PC-9 (cell line): ENCODE measurements at regions of chr2 and their contacts with region 1.

Region 1: DNA sequence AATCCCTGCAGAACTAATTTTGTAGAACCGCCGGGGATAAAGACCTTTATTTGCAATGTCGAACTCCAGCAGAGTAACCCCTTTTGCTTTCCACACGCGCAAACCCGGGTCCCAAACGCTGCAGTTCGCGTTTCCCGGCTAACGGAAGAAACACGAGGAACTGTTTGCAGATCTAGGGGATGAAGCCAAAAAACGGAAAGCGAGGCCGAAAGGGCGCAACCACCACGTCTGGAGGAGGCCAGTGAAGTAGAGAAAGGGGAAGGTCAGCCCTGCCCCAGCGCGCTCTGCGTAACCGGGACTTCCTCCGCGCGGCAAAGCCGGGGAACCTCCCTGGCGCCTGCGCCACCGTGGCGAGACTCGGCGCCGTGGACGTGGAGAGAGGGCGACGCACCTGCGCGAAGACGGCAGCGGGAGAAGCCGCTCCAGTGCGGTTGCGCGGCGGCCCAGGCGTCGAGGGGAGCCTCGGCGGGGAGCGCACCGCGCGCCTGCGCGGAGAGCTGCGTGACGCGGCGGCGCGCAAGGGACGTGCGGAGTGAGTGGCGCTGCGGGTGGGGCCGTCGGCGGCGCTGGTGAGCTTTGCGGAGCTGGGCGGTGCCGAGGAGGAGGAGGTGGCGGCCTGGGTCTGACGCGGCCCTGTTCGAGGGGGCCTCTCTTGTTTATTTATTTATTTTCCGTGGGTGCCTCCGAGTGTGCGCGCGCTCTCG is at the start of gene PPP1CB:
- DNase-seq: peak; percentile 84 to 96
- H3K4me3 ChIP-seq: peak within 1 kb of the TSS; percentile 93
- H3K27ac ChIP-seq: peak within 1 kb of the TSS; percentile 90
- H3K4me1 ChIP-seq: peaks cover 43% of the 10 kb centered on the region
- H3K27me3 ChIP-seq: no peaks in the 10 kb centered on the region
- CTCF ChIP-seq: no peak; the same call in 1 of the 2 replicates
- total RNA-seq, gene PPP1CB: 231 and 260 TPM in 2 replicates

Region 2: GRCh38 chr2:27428213-27428977 is 1323.0 kb before region 1 on chr2 and contains the start of gene NRBP1:
- CTCF ChIA-PET with region 1: interaction called, 18 read pairs
- POLR2A ChIA-PET with region 1: no interaction called
- intact Hi-C with region 1: no loop called
- DNase-seq: peak; percentile 77 to 90
- H3K4me3 ChIP-seq: peak within 1 kb of the TSS; percentile 64
- H3K27ac ChIP-seq: peak within 1 kb of the TSS; percentile 64
- H3K4me1 ChIP-seq: peaks cover 27% of the 10 kb centered on the region
- H3K27me3 ChIP-seq: no peaks in the 10 kb centered on the region
- CTCF ChIP-seq: no peak
- total RNA-seq, gene NRBP1: 67.9 and 83.9 TPM in 2 replicates

Region 3: DNA sequence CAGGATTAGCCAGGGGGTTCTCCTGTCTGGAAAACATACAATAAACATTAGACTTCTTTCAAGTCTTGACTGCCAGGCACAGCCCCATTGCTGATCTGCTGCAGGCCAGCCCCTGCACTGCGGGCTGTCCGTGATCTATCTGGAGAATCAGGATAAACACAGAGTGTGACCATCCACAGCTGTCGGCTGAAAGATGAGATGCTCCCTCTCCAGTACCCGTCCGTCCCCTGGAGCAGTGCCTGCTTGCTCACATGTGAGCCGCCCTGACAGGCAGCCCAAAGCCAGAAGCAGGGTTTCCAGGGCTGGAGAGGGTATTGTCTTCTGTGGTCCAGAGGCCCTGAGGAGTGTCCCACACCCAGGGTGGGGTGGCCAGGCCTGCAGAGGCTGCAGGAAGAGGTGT is 404.8 kb before region 1 on chr2:
- CTCF ChIA-PET with region 1: no interaction called
- POLR2A ChIA-PET with region 1: no interaction called
- intact Hi-C with region 1: loop called (anchors 5 kb)
- DNase-seq: no peak
- H3K4me3 ChIP-seq: no peak overlapping the region
- H3K27ac ChIP-seq: no peak overlapping the region
- H3K4me1 ChIP-seq: peaks cover 11% of the 10 kb centered on the region
- H3K27me3 ChIP-seq: no peaks in the 10 kb centered on the region
- CTCF ChIP-seq: no peak

Region 4: GRCh38 chr2:28594289-28595108 is 156.9 kb before region 1 on chr2:
- CTCF ChIA-PET with region 1: interaction called, 8 read pairs
- POLR2A ChIA-PET with region 1: no interaction called
- intact Hi-C with region 1: loop called (anchors 1 kb)
- DNase-seq: peak; percentile 94 to 95
- H3K4me3 ChIP-seq: no peak overlapping the region; the same call in 1 of the 2 replicates
- H3K27ac ChIP-seq: peak overlapping the region; percentile 69
- H3K4me1 ChIP-seq: peaks cover 40% of the 10 kb centered on the region
- H3K27me3 ChIP-seq: no peaks in the 10 kb centered on the region
- CTCF ChIP-seq: peak; percentile 91

Region 5: GRCh38 chr2:28633746-28634145 is 117.7 kb before region 1 on chr2:
- CTCF ChIA-PET with region 1: no interaction called
- POLR2A ChIA-PET with region 1: interaction called, 11 read pairs
- intact Hi-C with region 1: no loop called
- DNase-seq: peak; percentile 83 to 98
- H3K4me3 ChIP-seq: no peak overlapping the region
- H3K27ac ChIP-seq: peak overlapping the region; percentile 85
- H3K4me1 ChIP-seq: peaks cover 28% of the 10 kb centered on the region
- H3K27me3 ChIP-seq: no peaks in the 10 kb centered on the region
- CTCF ChIP-seq: no peak

Region 6: GRCh38 chr2:28661589-28662001 is 89.8 kb before region 1 on chr2:
- CTCF ChIA-PET with region 1: no interaction called
- POLR2A ChIA-PET with region 1: interaction called, 4 read pairs
- intact Hi-C with region 1: loop called (anchors 5 kb)
- DNase-seq: peak; percentile 58 to 75
- H3K4me3 ChIP-seq: no peak overlapping the region
- H3K27ac ChIP-seq: peak overlapping the region; percentile 73
- H3K4me1 ChIP-seq: peaks cover 72% of the 10 kb centered on the region
- H3K27me3 ChIP-seq: no peaks in the 10 kb centered on the region
- CTCF ChIP-seq: no peak

Region 7: GRCh38 chr2:28764909-28765711 is 13.7 kb after region 1 on chr2:
- CTCF ChIA-PET with region 1: no interaction called
- POLR2A ChIA-PET with region 1: interaction called, 14 read pairs
- intact Hi-C with region 1: no loop called
- DNase-seq: no peak
- H3K4me3 ChIP-seq: no peak overlapping the region
- H3K27ac ChIP-seq: no peak overlapping the region
- H3K4me1 ChIP-seq: no peaks in the 10 kb centered on the region
- H3K27me3 ChIP-seq: no peaks in the 10 kb centered on the region
- CTCF ChIP-seq: no peak

Region 8: DNA sequence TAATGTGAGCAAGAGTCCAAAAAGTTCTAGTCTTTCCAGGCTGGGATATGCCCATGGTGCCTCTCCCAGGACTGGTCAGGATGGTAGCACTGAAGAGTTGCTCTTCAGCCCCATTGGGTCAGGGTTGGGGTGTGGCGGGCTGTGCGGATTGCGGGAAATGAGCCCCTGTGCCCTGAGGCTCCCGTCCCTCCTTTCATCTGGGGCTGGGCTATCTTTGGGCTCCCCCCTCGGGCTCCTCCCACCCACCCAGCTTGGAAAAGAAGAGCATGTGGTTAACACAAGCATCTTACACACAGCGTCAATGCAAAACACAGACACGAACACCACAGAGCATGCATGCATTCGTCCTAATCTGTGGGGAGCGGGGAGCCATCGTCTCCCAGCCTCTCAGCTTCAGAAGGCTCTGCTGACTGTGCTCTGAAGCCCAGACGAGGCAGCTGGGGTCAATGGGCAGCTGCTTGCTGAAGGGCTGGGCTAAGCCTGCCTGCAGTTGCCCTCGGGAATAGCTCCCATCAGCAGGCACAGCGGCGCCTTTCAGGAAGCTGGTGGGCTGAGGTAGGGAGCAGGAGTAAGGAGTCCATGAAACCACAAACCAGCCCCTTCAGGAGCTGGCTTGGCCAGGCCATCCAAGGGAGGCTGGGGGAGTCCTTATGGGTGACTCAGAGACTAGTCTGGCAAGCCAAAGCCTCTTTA is 476.7 kb after region 1 on chr2:
- CTCF ChIA-PET with region 1: no interaction called
- POLR2A ChIA-PET with region 1: no interaction called
- intact Hi-C with region 1: no loop called
- DNase-seq: no peak
- H3K4me3 ChIP-seq: no peak overlapping the region
- H3K27ac ChIP-seq: no peak overlapping the region
- H3K4me1 ChIP-seq: peaks cover 18% of the 10 kb centered on the region
- H3K27me3 ChIP-seq: peaks cover 40% of the 10 kb centered on the region
- CTCF ChIP-seq: no peak